Endothelial cell of umbilical vein (primary cell): ENCODE measurements at regions of chr3 and their contacts with region 1.

Region 1: GRCh38 chr3:44913868-44914468 is 39.6 kb downstream of the TGM4 start:
- DNase-seq: peak; percentile 70
- H3K4me3 ChIP-seq: no peak overlapping the region
- H3K27ac ChIP-seq: no peak overlapping the region
- H3K4me1 ChIP-seq: peaks cover 3% of the 10 kb centered on the region
- H3K27me3 ChIP-seq: peaks cover 0 to 8% of the 10 kb centered on the region in 2 experiments
- CTCF ChIP-seq: peak; percentile 91 to 93
- POLR2A ChIP-seq: no peak

Region 2: GRCh38 chr3:44529927-44530326 is 384.0 kb before region 1 on chr3:
- CTCF ChIA-PET with region 1: interaction called, 58 read pairs
- POLR2A ChIA-PET with region 1: no interaction called
- dilution Hi-C with region 1: no loop called
- intact Hi-C with region 1: loop called (anchors 1 kb)
- DNase-seq: peak; percentile 8
- H3K4me3 ChIP-seq: no peak overlapping the region
- H3K27ac ChIP-seq: no peak overlapping the region
- H3K4me1 ChIP-seq: no peaks in the 10 kb centered on the region
- H3K27me3 ChIP-seq: no peaks in the 10 kb centered on the region
- CTCF ChIP-seq: peak; percentile 21 to 23
- POLR2A ChIP-seq: no peak

Region 3: GRCh38 chr3:44761424-44762169 is 152.4 kb before region 1 on chr3 and contains the starts of genes KIAA1143 and KIF15:
- CTCF ChIA-PET with region 1: interaction called, 6 read pairs
- POLR2A ChIA-PET with region 1: no interaction called
- dilution Hi-C with region 1: no loop called
- intact Hi-C with region 1: loop called (anchors 1 kb)
- DNase-seq: peak; percentile 96
- H3K4me3 ChIP-seq: peak within 1 kb of the TSS; percentile 57 to 91 (median 81)
- H3K27ac ChIP-seq: peak within 1 kb of the TSS; percentile 80
- H3K4me1 ChIP-seq: peaks cover 6% of the 10 kb centered on the region
- H3K27me3 ChIP-seq: no peaks in the 10 kb centered on the region
- CTCF ChIP-seq: no peak
- POLR2A ChIP-seq: peak; percentile 74
- total RNA-seq, gene KIAA1143: 25.2 and 28.1 TPM in 2 replicates
- total RNA-seq, gene KIF15: 20.9 and 21.6 TPM in 2 replicates

Region 4: GRCh38 chr3:44845528-44846520 is 68.1 kb before region 1 on chr3:
- CTCF ChIA-PET with region 1: interaction called, 10 read pairs
- POLR2A ChIA-PET with region 1: no interaction called
- dilution Hi-C with region 1: no loop called
- intact Hi-C with region 1: no loop called
- DNase-seq: no peak
- H3K4me3 ChIP-seq: no peak overlapping the region
- H3K27ac ChIP-seq: no peak overlapping the region
- H3K4me1 ChIP-seq: no peaks in the 10 kb centered on the region
- H3K27me3 ChIP-seq: no peaks in the 10 kb centered on the region
- CTCF ChIP-seq: no peak
- POLR2A ChIP-seq: no peak

Region 5: DNA sequence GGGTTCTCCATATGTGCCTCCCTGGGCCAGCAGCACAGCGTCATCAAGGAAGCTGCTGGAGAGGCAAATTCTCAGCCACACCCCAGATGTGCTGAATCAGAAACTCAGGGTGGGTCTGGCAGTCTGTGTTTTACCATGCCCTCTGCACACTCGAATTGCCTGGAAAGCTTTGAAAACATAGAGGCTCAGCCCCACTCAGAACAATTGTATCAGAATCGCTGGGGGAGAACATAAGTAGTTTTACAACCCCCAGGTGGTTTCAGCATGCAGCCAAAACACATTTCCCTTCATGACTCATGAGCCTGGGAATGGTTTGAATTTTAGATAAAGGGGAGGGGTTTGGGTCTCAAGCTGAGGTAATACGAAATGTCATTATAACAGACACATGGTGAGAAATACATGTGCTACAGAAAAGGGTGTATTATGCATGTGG is 30.0 kb before region 1 on chr3:
- CTCF ChIA-PET with region 1: interaction called, 15 read pairs
- POLR2A ChIA-PET with region 1: no interaction called
- dilution Hi-C with region 1: no loop called
- intact Hi-C with region 1: loop called (anchors 2 kb)
- DNase-seq: peak; percentile 90
- H3K4me3 ChIP-seq: no peak overlapping the region
- H3K27ac ChIP-seq: peak overlapping the region; percentile 91
- H3K4me1 ChIP-seq: peaks cover 38% of the 10 kb centered on the region
- H3K27me3 ChIP-seq: no peaks in the 10 kb centered on the region
- CTCF ChIP-seq: no peak
- POLR2A ChIP-seq: no peak

Region 6: GRCh38 chr3:45167011-45167911 is 253.3 kb after region 1 on chr3:
- CTCF ChIA-PET with region 1: no interaction called
- POLR2A ChIA-PET with region 1: no interaction called
- dilution Hi-C with region 1: no loop called
- intact Hi-C with region 1: no loop called
- DNase-seq: peak; percentile 93
- H3K4me3 ChIP-seq: peak overlapping the region in 1 of 3 experiments; percentile 28
- H3K27ac ChIP-seq: peak overlapping the region; percentile 97
- H3K4me1 ChIP-seq: peaks cover 22% of the 10 kb centered on the region
- H3K27me3 ChIP-seq: no peaks in the 10 kb centered on the region
- CTCF ChIP-seq: no peak
- POLR2A ChIP-seq: peak; percentile 11